ENCODE measurements at regions of chr10 and their contacts with region 1.

Region 1: DNA sequence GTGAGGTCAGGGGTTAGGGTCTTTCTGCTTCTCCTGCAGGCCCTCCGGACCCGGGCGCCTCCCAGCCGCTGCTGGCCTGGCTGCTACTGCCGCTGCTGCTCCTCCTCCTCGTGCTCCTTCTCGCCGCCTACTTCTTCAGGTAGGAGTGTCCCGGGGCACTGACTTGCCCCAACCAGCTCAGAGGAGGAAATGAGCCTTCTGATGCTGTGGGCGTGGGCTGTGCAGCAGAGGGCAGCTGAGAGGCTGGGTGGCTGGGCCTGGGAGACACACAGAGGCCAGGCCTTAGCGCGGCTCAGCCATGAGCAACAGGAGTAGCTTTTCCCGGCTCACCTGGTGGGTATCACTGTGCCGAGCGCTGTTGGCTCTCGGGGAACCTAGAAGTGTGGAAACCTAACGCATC is 78.9 kb downstream of the MKI67 start:
- DNase-seq: no peak
- H3K4me3 ChIP-seq: no peak overlapping the region
- H3K27ac ChIP-seq: no peak overlapping the region
- H3K4me1 ChIP-seq: peaks cover 0 to 6% of the 10 kb centered on the region in 2 experiments; a peak in 1 of 4 replicates
- H3K27me3 ChIP-seq: no peaks in the 10 kb centered on the region
- CTCF ChIP-seq: no peak
- EP300 ChIP-seq: no peak
- RAD21 ChIP-seq: no peak

Region 2: DNA sequence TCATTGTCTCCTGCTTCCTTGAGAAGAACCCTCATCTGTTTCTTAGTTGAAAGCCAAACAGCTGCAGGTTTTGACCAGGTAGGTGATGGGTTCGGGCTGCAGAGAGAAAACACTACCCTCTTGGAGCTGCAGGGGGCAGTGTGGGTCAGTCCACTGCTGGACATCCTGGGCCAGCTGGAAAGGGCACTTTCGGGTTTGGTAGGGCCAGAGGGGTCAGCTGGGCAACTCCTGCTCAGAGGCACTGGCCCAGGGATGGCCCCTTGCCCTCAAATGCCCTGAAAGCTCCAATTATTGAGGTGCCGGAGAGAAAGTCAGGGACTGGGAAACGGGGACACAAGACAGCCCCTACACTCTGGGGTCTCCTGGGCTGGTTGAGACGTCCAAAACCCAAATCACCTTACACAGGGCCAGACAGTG is 11.8 kb before region 1 on chr10:
- CTCF ChIA-PET with region 1: interaction called, 14 read pairs
- POLR2A ChIA-PET with region 1: no interaction called
- DNase-seq: peak; percentile 70
- H3K4me3 ChIP-seq: no peak overlapping the region
- H3K27ac ChIP-seq: no peak overlapping the region
- H3K4me1 ChIP-seq: 0 out of 4 replicates have a peak, but pooled peaks cover 0 to 5% of the 10 kb centered on the region in 2 experiments
- H3K27me3 ChIP-seq: no peaks in the 10 kb centered on the region
- CTCF ChIP-seq: peak; percentile 68
- EP300 ChIP-seq: no peak
- RAD21 ChIP-seq: peak; percentile 41; the same call in 1 of the 2 replicates

Region 3: GRCh38 chr10:128095027-128095752 is 47.8 kb after region 1 on chr10:
- CTCF ChIA-PET with region 1: no interaction called
- POLR2A ChIA-PET with region 1: no interaction called
- DNase-seq: no peak
- H3K4me3 ChIP-seq: no peak overlapping the region
- H3K27ac ChIP-seq: no peak overlapping the region
- H3K4me1 ChIP-seq: no peaks in the 10 kb centered on the region; a peak in 1 of 4 replicates
- H3K27me3 ChIP-seq: no peaks in the 10 kb centered on the region
- CTCF ChIP-seq: no peak
- EP300 ChIP-seq: no peak
- RAD21 ChIP-seq: no peak

Region 4: GRCh38 chr10:128268015-128268722 is 220.8 kb after region 1 on chr10:
- CTCF ChIA-PET with region 1: no interaction called
- POLR2A ChIA-PET with region 1: no interaction called
- DNase-seq: peak; percentile 87
- H3K4me3 ChIP-seq: no peak overlapping the region; a peak in 1 of 4 replicates
- H3K27ac ChIP-seq: no peak overlapping the region
- H3K4me1 ChIP-seq: peaks cover 0 to 17% of the 10 kb centered on the region in 2 experiments; a peak in 2 of 4 replicates
- H3K27me3 ChIP-seq: no peaks in the 10 kb centered on the region
- CTCF ChIP-seq: 0 out of 2 replicates have a peak, but pooled peaks have one; percentile 14
- EP300 ChIP-seq: no peak
- RAD21 ChIP-seq: peak; percentile 87

Region 5: DNA sequence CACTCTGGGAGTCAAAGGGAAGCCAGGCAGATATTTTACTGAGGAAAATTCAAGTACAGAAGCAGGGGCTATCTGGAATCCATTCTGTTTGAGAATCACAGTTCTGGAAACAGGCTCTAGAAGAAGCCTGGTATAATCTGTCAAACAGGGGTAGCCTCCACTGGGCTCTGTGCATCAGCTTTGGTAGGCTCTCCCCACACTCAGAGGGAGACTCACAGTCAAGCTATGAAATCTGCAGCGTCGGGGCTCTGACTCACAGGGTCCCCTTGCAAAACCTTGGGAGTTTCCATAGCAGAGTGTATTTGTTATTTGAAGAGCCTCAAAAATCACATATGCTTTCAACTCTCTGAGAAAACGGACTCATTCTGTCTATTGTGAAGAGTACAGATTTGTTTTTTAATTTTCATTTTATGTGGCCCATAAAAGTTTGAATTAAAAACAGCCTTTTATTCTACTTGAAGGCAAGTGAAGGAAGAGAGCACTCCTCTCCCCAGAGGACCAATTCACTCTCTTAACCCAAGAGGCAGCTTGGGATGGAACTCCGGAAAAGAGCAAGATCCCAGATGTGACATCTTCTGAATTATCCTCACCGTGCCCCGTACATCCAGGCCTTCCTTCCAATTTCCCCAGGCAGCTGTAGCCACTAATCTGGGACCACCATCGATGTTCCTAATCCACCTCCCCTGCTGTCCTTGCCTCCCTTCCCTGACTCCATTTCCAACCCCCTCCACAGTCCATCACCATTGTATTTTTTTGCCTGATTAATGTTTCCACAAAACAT is 828.8 kb after region 1 on chr10:
- CTCF ChIA-PET with region 1: no interaction called
- POLR2A ChIA-PET with region 1: no interaction called
- DNase-seq: no peak
- H3K4me3 ChIP-seq: no peak overlapping the region
- H3K27ac ChIP-seq: no peak overlapping the region
- H3K4me1 ChIP-seq: no peaks in the 10 kb centered on the region; a peak in 1 of 4 replicates
- H3K27me3 ChIP-seq: no peaks in the 10 kb centered on the region
- CTCF ChIP-seq: no peak
- EP300 ChIP-seq: no peak
- RAD21 ChIP-seq: no peak

Measured in SK-N-SH (cell line).